CD4-positive, alpha-beta T cell (primary cell): ENCODE measurements at regions of chr4 and their contacts with region 1.

Region 1: DNA sequence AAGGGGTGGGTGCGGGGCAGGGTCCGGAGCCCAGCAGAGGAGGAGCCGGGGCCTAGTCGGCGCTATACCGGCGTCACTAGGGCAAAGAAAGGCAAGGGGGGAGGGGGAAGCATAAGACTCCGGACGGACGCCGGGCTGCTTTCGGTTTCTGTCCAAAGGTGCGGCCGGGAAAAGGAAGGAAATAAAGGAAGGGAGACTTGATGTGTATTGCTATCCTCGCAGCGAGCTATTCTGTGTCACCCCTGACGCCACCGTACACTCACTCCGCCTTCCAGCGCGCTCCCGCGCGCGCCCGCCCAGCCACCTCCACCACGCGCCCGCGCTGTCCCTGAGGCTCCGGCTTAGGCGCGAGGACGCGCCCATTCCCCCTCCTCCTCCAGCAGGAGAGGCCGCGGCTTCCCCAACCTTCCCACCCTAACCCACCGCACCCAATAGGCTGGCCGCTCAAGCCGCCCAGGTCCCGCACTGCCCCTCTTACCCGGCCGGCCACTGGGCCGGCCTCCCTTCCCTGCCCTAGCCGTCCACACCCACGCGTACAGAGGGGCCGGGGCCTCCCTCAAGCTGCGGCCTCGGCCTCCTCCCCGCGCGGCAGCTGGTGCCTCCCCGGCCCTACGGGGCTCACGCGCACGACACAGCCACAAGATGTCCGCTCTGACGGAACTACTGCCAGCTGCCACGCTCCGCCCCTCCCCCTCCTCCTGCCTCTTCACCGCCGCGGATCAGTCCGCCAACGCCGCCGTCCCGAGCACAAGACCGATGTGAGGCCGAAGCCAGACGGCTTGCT is at the start of gene UBE2D3:
- DNase-seq: peak; percentile 92 to 98 (median 94)
- ATAC-seq: peak; percentile 39
- H3K4me3 ChIP-seq: peak within 1 kb of the TSS; percentile 89
- H3K4me3 Mint-ChIP-seq: no peak within 1 kb of the TSS
- H3K27ac ChIP-seq: peak within 1 kb of the TSS; percentile 99 to 100
- H3K27ac Mint-ChIP-seq: no peak within 1 kb of the TSS
- H3K4me1 ChIP-seq: peaks cover 14% of the 10 kb centered on the region
- H3K4me1 Mint-ChIP-seq: peaks cover 31% of the 10 kb centered on the region
- H3K27me3 ChIP-seq: no peaks in the 10 kb centered on the region
- H3K27me3 Mint-ChIP-seq: no peaks in the 10 kb centered on the region
- CTCF ChIP-seq: no peak
- total RNA-seq, gene UBE2D3: 659 to 719 TPM

Region 2: DNA sequence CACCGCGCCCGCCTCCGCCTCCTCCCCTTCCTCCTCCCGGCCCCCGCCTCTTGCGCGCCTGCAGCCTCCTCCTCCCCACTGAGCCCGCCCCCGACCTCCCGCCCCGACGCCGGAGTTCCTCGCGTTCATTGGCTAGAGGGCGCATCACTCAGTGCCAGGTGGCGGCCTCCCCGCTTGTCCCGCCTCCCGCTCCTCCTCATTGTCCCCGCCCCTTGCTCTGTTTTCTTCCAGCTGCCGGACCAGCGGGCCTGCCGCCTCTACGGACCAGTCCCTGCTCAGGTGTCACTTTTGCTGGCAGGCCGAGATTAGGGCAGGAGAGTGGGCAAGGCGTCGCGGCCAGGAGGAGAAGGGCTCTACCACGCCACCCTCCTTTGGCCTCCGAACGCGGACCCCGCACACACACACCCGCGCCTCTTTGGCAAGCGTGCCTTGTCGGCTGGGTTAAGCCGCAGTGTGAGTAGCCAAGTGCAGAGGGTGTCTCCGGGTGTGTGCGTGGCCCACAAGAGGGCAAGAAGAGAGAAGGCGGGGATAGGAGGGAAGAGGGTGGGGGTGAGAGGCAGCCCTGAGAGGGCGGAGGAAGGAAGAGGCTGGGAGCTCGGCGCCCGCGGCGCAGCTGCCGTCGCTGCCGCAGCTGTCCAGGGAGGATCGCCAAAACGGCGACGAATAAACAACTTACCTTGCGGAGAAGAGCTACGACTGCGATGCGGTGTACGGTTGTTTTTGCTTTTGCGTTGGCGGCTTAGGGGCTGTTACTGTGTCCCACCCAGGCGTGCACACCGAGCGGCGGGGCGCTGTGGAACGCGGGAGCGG is 1479.3 kb before region 1 on chr4:
- CTCF ChIA-PET with region 1: no interaction called
- POLR2A ChIA-PET with region 1: interaction called, 4 read pairs
- intact Hi-C with region 1: loop called in 1 of 2 experiments (anchors 5 kb)
- DNase-seq: peak; percentile 98 to 100 (median 99)
- ATAC-seq: peak; percentile 84
- H3K4me3 ChIP-seq: peak overlapping the region; percentile 86
- H3K4me3 Mint-ChIP-seq: peak overlapping the region; percentile 100
- H3K27ac ChIP-seq: peak overlapping the region; percentile 78 to 84
- H3K27ac Mint-ChIP-seq: peak overlapping the region; percentile 94
- H3K4me1 ChIP-seq: peaks cover 15% of the 10 kb centered on the region
- H3K4me1 Mint-ChIP-seq: peaks cover 38% of the 10 kb centered on the region
- H3K27me3 ChIP-seq: peaks cover 0 to 7% of the 10 kb centered on the region in 2 experiments
- H3K27me3 Mint-ChIP-seq: peaks cover 36% of the 10 kb centered on the region
- CTCF ChIP-seq: no peak

Region 3: GRCh38 chr4:102439236-102439614 is 387.9 kb before region 1 on chr4:
- CTCF ChIA-PET with region 1: no interaction called
- POLR2A ChIA-PET with region 1: no interaction called
- intact Hi-C with region 1: loop called in 1 of 2 experiments (anchors 10 kb)
- DNase-seq: peak in 2 of 14 experiments; percentile 14 to 16
- ATAC-seq: no peak
- H3K4me3 ChIP-seq: no peak overlapping the region
- H3K4me3 Mint-ChIP-seq: no peak overlapping the region
- H3K27ac ChIP-seq: no peak overlapping the region
- H3K27ac Mint-ChIP-seq: no peak overlapping the region
- H3K4me1 ChIP-seq: no peaks in the 10 kb centered on the region
- H3K4me1 Mint-ChIP-seq: no peaks in the 10 kb centered on the region
- H3K27me3 ChIP-seq: no peaks in the 10 kb centered on the region
- H3K27me3 Mint-ChIP-seq: no peaks in the 10 kb centered on the region
- CTCF ChIP-seq: no peak

Region 4: DNA sequence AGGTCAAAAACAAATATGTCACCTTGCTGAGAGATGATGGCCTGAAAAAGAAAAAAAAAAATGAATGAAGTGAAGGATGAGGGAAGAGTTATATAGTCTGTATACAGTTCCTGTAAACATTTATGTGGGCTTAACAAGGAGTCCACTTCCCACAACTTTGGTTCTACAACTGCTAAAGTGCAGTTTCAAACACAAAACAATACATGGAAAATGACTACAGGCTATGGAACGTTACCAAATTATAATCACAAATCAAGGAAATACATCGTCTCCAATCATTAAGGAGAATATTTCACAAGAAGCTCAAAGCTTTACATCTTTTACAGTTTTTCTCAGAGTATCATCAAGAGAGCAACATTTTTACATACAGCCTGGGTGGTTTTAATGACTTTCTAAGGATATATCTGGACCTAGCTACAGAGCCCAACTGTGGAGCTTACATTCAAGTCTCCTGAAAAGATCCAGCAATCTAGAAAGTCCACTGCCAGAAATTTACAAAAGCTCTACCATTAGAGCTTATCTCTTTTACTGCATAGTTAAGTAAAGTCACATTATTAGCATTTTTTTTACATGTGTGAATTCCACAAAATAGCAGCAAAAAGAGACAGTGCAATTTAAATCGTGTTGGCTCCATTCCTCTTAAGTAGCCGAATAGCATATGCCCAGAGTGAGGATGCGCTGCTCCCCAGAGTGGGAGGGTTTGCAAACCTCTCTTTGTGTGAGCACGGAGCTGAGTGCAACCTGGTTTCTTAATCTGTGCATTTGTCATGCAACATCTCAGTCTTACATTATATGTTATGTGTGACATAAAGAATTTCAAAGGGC is 194.6 kb before region 1 on chr4:
- CTCF ChIA-PET with region 1: interaction called, 5 read pairs
- POLR2A ChIA-PET with region 1: interaction called, 26 read pairs
- intact Hi-C with region 1: no loop called
- DNase-seq: no peak
- ATAC-seq: no peak
- H3K4me3 ChIP-seq: no peak overlapping the region
- H3K4me3 Mint-ChIP-seq: no peak overlapping the region
- H3K27ac ChIP-seq: no peak overlapping the region
- H3K27ac Mint-ChIP-seq: peak overlapping the region; percentile 94
- H3K4me1 ChIP-seq: peaks cover 20% of the 10 kb centered on the region
- H3K4me1 Mint-ChIP-seq: peaks cover 53% of the 10 kb centered on the region
- H3K27me3 ChIP-seq: no peaks in the 10 kb centered on the region
- H3K27me3 Mint-ChIP-seq: no peaks in the 10 kb centered on the region
- CTCF ChIP-seq: no peak

Region 5: DNA sequence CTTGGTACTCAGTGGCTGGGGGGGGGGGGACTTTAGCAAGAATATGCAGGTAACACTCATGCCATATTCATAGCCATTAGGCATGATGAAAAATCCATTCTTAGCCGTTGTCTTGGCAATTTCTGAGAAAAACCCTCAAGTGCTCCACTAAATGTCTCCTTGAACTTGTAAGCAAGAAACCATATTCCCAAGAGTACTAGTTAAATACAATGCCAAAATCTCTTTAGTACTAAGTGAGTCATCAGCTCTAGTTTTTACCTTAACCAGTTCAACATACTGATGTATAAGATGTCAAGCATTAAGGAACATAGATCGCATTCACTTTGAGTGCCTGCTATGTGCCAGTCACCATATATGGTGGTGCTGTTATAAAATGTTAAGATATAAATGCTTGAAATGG is 27.3 kb before region 1 on chr4:
- CTCF ChIA-PET with region 1: no interaction called
- POLR2A ChIA-PET with region 1: interaction called, 22 read pairs
- intact Hi-C with region 1: no loop called
- DNase-seq: no peak
- ATAC-seq: no peak
- H3K4me3 ChIP-seq: no peak overlapping the region
- H3K4me3 Mint-ChIP-seq: no peak overlapping the region
- H3K27ac ChIP-seq: no peak overlapping the region
- H3K27ac Mint-ChIP-seq: no peak overlapping the region
- H3K4me1 ChIP-seq: peaks cover 3% of the 10 kb centered on the region
- H3K4me1 Mint-ChIP-seq: peaks cover 38% of the 10 kb centered on the region
- H3K27me3 ChIP-seq: no peaks in the 10 kb centered on the region
- H3K27me3 Mint-ChIP-seq: no peaks in the 10 kb centered on the region
- CTCF ChIP-seq: no peak

Region 6: DNA sequence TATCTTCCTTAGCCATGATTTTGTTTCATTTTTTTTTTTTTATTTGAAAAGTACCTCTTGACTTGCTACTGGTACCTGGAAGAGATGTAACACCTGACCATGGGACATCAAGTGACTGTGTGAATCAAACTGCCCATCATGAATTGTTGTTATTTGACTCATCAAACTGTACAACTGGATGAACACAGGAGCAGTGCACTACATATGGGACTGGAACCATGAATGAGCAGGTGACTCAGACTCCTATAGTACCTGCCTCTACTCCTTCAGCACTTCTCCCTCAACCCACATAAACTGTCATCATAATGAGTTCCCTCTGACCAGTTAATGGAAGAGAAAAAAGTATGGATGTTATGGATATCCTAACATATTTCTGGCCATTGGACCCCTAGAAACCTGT is 16.2 kb after region 1 on chr4:
- CTCF ChIA-PET with region 1: interaction called, 5 read pairs
- POLR2A ChIA-PET with region 1: interaction called, 24 read pairs
- intact Hi-C with region 1: no loop called
- DNase-seq: no peak
- ATAC-seq: no peak
- H3K4me3 ChIP-seq: no peak overlapping the region
- H3K4me3 Mint-ChIP-seq: no peak overlapping the region
- H3K27ac ChIP-seq: no peak overlapping the region
- H3K27ac Mint-ChIP-seq: no peak overlapping the region
- H3K4me1 ChIP-seq: no peaks in the 10 kb centered on the region
- H3K4me1 Mint-ChIP-seq: no peaks in the 10 kb centered on the region
- H3K27me3 ChIP-seq: no peaks in the 10 kb centered on the region
- H3K27me3 Mint-ChIP-seq: no peaks in the 10 kb centered on the region
- CTCF ChIP-seq: no peak

Region 7: DNA sequence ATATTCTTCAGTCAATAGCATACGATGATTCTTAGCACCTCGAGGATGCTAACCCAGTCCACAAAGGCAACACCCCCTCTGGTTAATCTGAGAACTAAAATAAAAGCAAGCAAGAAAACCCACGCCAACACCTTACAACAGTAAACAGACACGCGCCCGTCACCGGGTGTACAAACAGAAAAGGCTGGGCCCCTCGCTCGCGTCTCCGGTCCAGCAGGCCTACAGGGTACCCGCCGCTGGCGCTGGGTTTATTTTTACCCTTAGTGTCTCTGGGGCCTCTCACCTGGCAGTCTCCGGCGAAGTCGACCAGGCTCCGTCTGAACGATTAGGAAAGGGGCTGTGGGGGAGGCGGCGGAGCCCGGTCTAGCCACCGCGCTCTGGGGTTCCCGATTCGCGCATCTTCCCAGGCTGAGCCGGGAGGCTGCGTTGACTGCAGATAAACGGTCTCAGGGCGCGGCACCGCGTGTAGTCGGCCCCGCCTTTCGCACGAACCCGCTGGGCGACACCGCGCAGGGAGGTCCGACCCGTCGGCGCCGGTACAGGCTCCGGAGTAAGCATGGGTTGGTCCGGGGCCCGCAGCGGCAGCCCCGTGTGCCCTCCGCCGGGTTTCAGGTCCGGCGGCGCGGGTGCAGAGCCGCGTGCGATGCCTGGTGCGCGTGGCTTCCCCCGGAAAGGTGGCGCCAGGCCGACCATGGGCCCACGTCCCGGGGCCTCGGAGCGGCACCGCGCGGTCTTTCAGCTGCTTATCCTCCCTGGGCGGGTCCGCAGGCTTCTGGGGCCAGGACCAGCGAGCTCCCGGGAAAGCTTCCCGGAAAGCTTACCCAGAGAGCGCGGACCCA is 249.0 kb after region 1 on chr4:
- CTCF ChIA-PET with region 1: interaction called, 4 read pairs
- POLR2A ChIA-PET with region 1: interaction called, 24 read pairs
- intact Hi-C with region 1: no loop called
- DNase-seq: peak; percentile 43 to 80 (median 58)
- ATAC-seq: peak; percentile 81
- H3K4me3 ChIP-seq: peak overlapping the region; percentile 81
- H3K4me3 Mint-ChIP-seq: peak overlapping the region; percentile 88
- H3K27ac ChIP-seq: peak overlapping the region; percentile 78 to 88
- H3K27ac Mint-ChIP-seq: peak overlapping the region; percentile 94
- H3K4me1 ChIP-seq: peaks cover 17% of the 10 kb centered on the region
- H3K4me1 Mint-ChIP-seq: peaks cover 59% of the 10 kb centered on the region
- H3K27me3 ChIP-seq: no peaks in the 10 kb centered on the region
- H3K27me3 Mint-ChIP-seq: no peaks in the 10 kb centered on the region
- CTCF ChIP-seq: no peak

Region 8: DNA sequence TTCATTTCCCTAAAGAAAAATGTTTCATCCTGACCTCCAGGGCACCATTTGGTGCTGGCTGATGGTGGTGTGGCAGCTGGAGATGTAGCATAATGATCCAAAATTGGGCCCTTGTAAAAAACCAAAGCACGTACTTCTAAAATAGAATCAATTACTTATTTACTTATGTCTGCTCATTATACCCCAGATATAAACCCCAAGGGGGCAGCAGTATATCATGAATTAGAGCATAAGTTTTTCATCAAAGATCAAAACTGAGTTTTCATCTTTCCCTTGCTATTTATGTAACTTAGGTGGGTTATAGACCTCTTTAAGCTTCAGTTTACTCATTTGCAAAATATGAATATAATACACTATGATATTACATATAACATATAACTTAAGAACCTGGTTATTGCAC is 651.6 kb after region 1 on chr4:
- CTCF ChIA-PET with region 1: no interaction called
- POLR2A ChIA-PET with region 1: no interaction called
- intact Hi-C with region 1: no loop called
- DNase-seq: no peak
- ATAC-seq: no peak
- H3K4me3 ChIP-seq: no peak overlapping the region
- H3K4me3 Mint-ChIP-seq: no peak overlapping the region
- H3K27ac ChIP-seq: no peak overlapping the region
- H3K27ac Mint-ChIP-seq: no peak overlapping the region
- H3K4me1 ChIP-seq: no peaks in the 10 kb centered on the region
- H3K4me1 Mint-ChIP-seq: no peaks in the 10 kb centered on the region
- H3K27me3 ChIP-seq: no peaks in the 10 kb centered on the region
- H3K27me3 Mint-ChIP-seq: no peaks in the 10 kb centered on the region
- CTCF ChIP-seq: no peak